Aorta (tissue), 5 donors: ENCODE measurements at regions of chr5 and their contacts with region 1.

Region 1: DNA sequence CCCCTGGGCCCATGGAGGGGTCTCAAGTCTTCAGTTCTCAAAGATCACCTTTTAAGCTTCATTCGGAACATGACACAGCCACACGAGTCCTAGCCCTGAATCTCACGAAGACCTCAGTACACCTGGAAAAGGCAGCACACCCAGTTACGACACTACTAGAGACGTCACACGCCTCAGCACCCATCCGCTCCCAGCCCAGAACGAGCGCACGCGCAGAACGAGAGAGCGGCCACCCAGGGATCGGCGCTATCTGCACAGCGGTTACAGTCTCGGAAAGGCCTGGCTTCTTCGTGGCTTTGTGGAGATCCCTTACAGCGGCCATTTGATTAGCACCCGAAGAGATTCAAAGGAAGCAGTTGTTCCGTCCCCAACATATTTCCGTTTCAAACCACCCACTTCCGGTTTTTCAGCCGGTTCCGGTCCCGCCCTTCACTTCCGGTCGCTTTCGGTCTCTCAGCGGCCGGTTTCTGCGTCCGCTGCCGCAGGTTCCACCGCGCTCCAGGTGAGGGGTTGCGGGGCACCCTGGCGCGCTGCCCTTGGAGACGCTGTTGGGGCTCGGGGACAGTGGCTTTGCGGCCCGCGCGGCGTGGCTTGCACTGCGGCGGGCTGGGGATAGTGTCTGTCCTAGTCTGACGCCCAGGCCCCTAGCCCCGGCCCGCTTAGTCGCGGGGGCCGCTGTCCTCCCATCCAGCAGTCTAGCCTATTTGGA is at the start of gene UBLCP1:
- DNase-seq: peak; percentile 83 to 92
- ATAC-seq: peak; percentile 92
- H3K4me3 ChIP-seq: peak within 1 kb of the TSS; percentile 63 to 92
- H3K27ac ChIP-seq: peak within 1 kb of the TSS; percentile 8 to 76
- H3K4me1 ChIP-seq: peaks cover 0 to 1% of the 10 kb centered on the region in 2 donors
- H3K27me3 ChIP-seq: no peaks in the 10 kb centered on the region
- total RNA-seq, gene UBLCP1: 20.0 to 23.5 TPM

Region 2: GRCh38 chr5:159156426-159157238 is 106.4 kb before region 1 on chr5:
- intact Hi-C with region 1: loop called (anchors 5 kb)
- DNase-seq: no peak
- ATAC-seq: peak; percentile 78
- H3K4me3 ChIP-seq: no peak overlapping the region
- H3K27ac ChIP-seq: no peak overlapping the region
- H3K4me1 ChIP-seq: no peaks in the 10 kb centered on the region
- H3K27me3 ChIP-seq: no peaks in the 10 kb centered on the region

Region 3: GRCh38 chr5:159209438-159210305 is 53.3 kb before region 1 on chr5 and contains the start of gene RNF145:
- intact Hi-C with region 1: loop called (anchors 5 kb)
- DNase-seq: peak; percentile 92 to 96
- ATAC-seq: peak; percentile 88
- H3K4me3 ChIP-seq: peak within 1 kb of the TSS; percentile 76 to 84
- H3K27ac ChIP-seq: peak within 1 kb of the TSS in 1 of 2 donors; percentile 91
- H3K4me1 ChIP-seq: no peaks in the 10 kb centered on the region
- H3K27me3 ChIP-seq: no peaks in the 10 kb centered on the region
- total RNA-seq, gene RNF145: 44.8 to 67.8 TPM

Region 4: DNA sequence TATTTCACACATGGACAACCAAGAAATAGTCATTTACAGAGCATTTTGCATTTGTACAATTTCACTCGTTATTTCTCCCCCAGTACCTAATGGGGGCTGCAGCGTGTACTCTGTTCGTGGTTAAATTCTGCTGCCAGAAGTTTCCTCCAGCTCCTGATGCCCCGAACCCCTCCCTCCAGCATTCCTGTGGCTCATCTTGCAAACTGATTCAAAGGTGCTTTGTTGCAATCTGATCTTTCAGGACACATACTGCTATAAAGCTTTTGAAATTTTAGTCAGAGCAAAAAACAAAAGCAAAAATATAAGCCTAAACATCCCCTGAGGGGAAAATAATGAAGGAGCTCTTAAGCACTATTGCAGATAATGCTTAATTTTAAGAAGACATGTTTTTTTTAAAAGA is 27.7 kb after region 1 on chr5:
- intact Hi-C with region 1: no loop called
- DNase-seq: no peak
- ATAC-seq: no peak
- H3K4me3 ChIP-seq: no peak overlapping the region
- H3K27ac ChIP-seq: no peak overlapping the region
- H3K4me1 ChIP-seq: no peaks in the 10 kb centered on the region
- H3K27me3 ChIP-seq: no peaks in the 10 kb centered on the region